ENCODE measurements at regions of chr11 and their contacts with region 1.

Region 1: GRCh38 chr11:6298605-6299004 is 21.7 kb downstream of the CAVIN3 start:
- DNase-seq: no peak
- ATAC-seq: peak; percentile 69

Region 2: GRCh38 chr11:6251120-6251733 is 47.4 kb before region 1 on chr11:
- intact Hi-C with region 1: loop called (anchors 2 kb)
- DNase-seq: peak; percentile 79
- ATAC-seq: peak; percentile 82

Region 3: DNA sequence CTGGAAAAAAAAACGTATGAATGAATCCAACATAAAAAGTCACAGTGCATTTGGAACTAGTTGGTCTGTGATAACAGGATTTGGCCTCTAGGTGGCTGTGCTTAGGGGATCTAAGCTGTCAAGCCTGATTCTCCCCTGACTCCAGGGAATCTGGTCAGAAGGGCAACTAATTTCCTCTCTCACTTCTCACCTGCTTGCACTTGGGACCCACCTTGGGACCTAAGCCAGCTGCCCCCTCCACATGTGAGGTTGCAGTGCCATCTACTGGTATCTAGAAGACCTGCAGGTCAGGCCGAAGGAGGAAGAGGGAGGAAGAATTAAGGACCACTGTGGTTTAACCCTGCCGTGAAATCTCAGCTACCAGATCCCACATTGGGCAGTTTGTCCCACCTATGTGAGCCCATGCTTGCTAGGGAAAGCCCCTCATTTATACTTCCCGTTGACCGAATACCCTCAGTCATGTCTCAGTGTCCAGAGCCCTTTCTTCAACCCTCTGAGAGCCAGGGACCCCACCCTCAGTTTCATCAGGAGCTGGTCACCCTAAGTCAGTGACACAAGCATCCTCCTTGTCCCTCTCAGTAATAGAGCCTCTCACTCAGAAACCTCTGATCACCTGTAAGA is 54.9 kb after region 1 on chr11:
- intact Hi-C with region 1: loop called (anchors 1 kb)
- DNase-seq: peak; percentile 74
- ATAC-seq: peak; percentile 59